ENCODE measurements at regions of chr1 and their contacts with region 1.

Region 1: DNA sequence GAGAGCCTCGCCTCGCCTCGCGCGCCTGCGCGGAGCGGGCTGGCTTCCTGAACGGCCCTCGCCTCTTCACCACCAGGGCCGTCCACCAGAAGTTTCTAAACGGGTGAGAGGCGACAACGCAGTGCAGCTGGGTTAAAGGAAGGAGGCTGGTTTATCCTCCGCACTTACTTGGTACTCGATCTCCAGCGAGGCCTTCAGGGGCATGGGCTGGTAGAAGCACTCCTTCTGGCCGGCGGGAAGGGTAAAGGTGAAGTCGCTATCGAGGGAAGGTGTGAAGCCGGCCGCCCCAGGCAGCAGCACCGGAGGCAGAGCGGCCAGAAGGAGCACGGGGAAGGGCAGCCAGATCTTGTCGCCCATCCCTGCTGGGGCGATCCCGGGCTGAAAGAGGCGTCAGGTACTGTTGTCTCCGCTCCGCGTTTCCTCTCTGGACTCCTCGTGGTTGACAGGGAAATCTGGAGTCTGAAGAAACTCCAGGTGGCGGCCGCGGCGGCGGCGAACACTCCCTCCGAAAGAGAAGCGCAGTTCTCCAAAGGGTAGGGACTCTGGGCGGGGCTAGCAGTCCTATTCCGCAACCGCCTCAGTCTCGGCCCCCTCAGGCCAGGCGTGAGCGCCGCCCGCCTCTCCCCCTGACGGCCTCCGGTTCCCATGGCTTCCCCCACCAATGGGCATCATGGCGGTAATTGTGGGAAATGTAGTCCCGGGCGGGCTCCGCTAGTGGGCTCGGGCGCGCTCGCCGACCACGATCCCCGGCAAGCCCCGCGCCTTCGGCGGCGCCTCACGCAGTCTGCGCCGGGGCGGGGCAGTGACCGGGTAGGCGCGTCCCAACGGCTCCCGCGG is at the start of gene TMED5:
- DNase-seq: peak; percentile 98
- H3K4me3 ChIP-seq: peak within 1 kb of the TSS; percentile 79
- H3K27ac ChIP-seq: peak within 1 kb of the TSS; percentile 90
- H3K4me1 ChIP-seq: peaks cover 50% of the 10 kb centered on the region
- CTCF ChIP-seq: no peak
- total RNA-seq, gene TMED5: 40.3 and 43.1 TPM in 2 replicates

Region 2: DNA sequence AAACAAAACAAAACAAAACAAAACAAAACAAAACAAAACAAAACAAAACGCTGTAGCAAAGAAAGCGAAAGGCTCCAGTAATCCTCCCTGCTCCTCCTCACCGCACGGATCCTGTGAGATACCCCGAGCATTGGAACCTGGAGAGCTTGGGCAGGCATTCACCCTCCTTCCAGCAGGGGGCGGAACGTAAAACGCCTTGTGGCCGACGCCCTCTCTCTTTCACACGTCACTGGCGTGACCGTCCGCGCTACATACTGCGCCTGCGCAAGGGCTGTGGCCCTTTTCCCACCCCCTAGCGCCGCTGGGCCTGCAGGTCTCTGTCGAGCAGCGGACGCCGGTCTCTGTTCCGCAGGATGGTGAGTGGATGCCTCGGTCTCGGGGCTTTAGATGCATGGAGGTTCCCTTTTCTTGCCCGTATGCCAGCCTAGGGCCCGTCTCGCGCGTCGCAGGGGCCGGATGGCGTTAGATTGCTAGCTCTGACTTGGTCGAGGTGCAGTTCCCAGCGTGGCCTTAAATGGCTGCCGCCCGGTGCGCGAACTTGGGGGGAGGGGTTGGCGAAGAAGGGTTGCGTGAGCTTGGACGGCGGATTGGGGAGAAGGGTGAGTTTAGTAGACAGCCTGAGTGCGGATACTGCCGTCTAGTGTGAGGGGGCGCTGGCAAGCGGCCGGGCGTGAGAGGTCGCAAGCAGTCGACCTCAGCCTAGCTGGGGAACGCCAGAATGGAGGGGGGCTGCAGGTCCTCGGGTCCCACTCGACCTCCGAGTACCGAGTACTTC is 348.2 kb before region 1 on chr1 and contains the start of gene RPL5:
- CTCF ChIA-PET with region 1: no interaction called
- POLR2A ChIA-PET with region 1: no interaction called
- intact Hi-C with region 1: loop called (anchors 10 kb)
- DNase-seq: peak; percentile 98
- H3K4me3 ChIP-seq: peak within 1 kb of the TSS; percentile 89
- H3K27ac ChIP-seq: peak within 1 kb of the TSS; percentile 59
- H3K4me1 ChIP-seq: peaks cover 41% of the 10 kb centered on the region
- CTCF ChIP-seq: peak; percentile 85
- total RNA-seq, gene RPL5: 1,862 and 2,614 TPM in 2 replicates

Region 3: DNA sequence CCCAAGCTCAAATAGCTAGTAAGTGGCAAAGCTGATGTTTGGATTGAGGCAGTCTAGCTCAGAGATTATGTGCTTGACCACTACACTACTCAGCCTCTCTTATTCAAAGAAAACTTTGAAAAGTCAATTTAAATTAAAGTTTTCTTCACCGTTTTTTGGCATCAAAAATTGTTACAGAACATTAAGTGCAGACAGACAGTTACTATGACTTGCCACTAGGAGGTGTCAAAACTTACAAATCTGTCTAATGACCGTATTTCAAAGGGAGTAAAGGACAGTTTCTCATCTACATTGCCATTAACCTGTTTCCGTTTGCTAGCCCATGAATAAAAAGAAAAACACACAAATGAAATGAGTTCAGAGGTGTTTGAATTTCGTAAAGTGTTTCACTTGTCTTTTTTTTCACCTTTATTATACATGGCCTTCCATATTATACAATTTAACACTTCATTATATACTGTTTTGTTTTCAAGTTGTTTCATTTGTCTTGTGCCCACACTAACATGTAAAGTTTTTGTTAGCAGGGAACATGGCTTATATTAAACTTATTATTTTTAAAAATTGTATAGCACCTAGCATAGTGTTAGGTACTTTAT is 158.5 kb before region 1 on chr1:
- CTCF ChIA-PET with region 1: no interaction called
- POLR2A ChIA-PET with region 1: no interaction called
- intact Hi-C with region 1: loop called (anchors 5 kb)
- DNase-seq: peak; percentile 87
- H3K4me3 ChIP-seq: peak overlapping the region; percentile 40
- H3K27ac ChIP-seq: peak overlapping the region; percentile 75
- H3K4me1 ChIP-seq: peaks cover 57% of the 10 kb centered on the region
- CTCF ChIP-seq: peak; percentile 100

Measured in OCI-LY7 (cell line).